GM13977 (cell line): ENCODE measurements at regions of chr2 and their contacts with region 1.

Region 1: DNA sequence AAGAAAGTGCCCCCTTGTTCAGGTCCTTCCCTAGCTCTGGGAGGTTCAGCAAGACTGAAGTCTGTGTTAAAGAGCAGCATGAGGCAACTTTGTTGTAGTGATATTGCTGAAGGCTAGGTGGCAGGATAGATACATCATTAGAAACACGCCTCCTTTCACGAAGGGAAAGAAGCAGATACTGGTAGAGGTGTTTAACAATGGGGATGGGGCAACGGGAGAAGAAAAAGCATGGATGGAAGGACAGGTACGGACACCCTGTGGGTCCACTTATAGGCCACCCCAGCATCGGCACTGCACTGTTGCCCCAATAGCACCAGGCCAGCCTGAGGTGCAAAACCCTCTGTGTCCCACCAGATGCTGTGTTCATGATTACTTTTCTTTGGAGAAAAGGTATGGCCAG is 3.5 kb upstream of the IGFBP5 start:
- DNase-seq: peak; percentile 63
- CTCF ChIP-seq: peak; percentile 64

Region 2: DNA sequence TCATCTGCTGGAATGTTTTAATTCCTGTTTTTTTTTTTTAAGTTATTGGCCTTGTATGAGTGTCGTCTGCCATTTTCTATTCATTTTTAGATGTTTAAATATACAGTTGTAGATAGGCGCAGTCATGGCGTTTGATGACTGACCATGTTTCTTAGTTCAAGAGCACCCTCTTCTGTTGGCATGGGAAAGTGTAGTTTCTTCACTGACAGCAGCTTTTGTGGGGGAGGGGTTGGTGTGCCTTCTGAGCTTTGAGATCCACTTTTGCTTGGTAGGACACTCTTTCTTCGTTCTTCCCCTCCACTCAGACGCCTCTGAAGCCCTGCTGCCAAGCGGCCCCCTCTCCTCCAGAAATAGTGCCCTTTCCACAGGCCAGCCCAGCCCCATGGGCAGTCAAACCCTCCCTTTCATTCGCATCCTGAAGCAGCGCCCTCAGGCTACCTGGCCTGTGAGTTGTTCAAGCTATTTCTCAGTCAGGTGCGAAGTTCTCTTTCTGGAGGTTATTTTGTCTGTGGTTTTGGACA is 811.9 kb after region 1 on chr2:
- in situ Hi-C with region 1: loop called (anchors 10 kb)
- DNase-seq: peak; percentile 77
- CTCF ChIP-seq: peak; percentile 73